Activated CD4-positive, alpha-beta memory T cell treated with anti-CD3 and anti-CD28 coated beads for 36 hours (primary cell): ENCODE measurements at regions of chr12 and their contacts with region 1.

Region 1: GRCh38 chr12:57462251-57462911 is 2.8 kb downstream of the GLI1 start:
- DNase-seq: peak; percentile 94
- H3K4me3 Mint-ChIP-seq: peak overlapping the region; percentile 80
- H3K27ac Mint-ChIP-seq: peak overlapping the region; percentile 40
- H3K4me1 Mint-ChIP-seq: peaks cover 44% of the 10 kb centered on the region
- H3K27me3 Mint-ChIP-seq: peaks cover 4% of the 10 kb centered on the region

Region 2: GRCh38 chr12:57229634-57230380 is 232.6 kb before region 1 on chr12 and contains the start of gene SHMT2:
- CTCF ChIA-PET with region 1: interaction called, 12 read pairs
- POLR2A ChIA-PET with region 1: no interaction called
- intact Hi-C with region 1: no loop called
- DNase-seq: peak; percentile 96
- H3K4me3 Mint-ChIP-seq: peak within 1 kb of the TSS; percentile 98
- H3K27ac Mint-ChIP-seq: peak within 1 kb of the TSS; percentile 94
- H3K4me1 Mint-ChIP-seq: peaks cover 56% of the 10 kb centered on the region
- H3K27me3 Mint-ChIP-seq: peaks cover 20% of the 10 kb centered on the region
- total RNA-seq, gene SHMT2: 401 to 404 TPM

Region 3: GRCh38 chr12:57268264-57268663 is 194.1 kb before region 1 on chr12:
- CTCF ChIA-PET with region 1: interaction called, 10 read pairs
- POLR2A ChIA-PET with region 1: no interaction called
- intact Hi-C with region 1: no loop called
- DNase-seq: peak; percentile 66
- H3K4me3 Mint-ChIP-seq: no peak overlapping the region
- H3K27ac Mint-ChIP-seq: peak overlapping the region; percentile 81
- H3K4me1 Mint-ChIP-seq: peaks cover 16% of the 10 kb centered on the region
- H3K27me3 Mint-ChIP-seq: no peaks in the 10 kb centered on the region

Region 4: DNA sequence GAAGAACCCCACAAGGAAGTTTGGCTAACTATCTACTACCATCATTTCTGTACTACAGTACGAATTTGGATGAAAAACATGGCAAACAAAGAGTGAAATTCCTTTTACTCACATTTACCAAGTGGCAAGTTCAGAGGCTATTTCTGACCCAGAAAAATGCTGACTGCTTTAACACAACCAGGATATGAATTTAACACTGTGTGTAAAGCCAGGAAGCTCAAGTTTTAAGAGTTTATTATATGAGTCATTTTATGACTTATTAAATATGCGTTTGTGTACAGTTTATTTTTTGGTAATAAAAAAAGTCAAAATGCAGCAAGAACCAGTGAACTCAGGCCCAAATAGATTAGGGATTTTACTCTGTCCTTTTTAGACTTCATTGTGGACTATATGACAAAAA is 153.0 kb before region 1 on chr12:
- CTCF ChIA-PET with region 1: interaction called, 31 read pairs
- POLR2A ChIA-PET with region 1: no interaction called
- intact Hi-C with region 1: no loop called
- DNase-seq: no peak
- H3K4me3 Mint-ChIP-seq: no peak overlapping the region
- H3K27ac Mint-ChIP-seq: no peak overlapping the region
- H3K4me1 Mint-ChIP-seq: peaks cover 8% of the 10 kb centered on the region
- H3K27me3 Mint-ChIP-seq: no peaks in the 10 kb centered on the region

Region 5: DNA sequence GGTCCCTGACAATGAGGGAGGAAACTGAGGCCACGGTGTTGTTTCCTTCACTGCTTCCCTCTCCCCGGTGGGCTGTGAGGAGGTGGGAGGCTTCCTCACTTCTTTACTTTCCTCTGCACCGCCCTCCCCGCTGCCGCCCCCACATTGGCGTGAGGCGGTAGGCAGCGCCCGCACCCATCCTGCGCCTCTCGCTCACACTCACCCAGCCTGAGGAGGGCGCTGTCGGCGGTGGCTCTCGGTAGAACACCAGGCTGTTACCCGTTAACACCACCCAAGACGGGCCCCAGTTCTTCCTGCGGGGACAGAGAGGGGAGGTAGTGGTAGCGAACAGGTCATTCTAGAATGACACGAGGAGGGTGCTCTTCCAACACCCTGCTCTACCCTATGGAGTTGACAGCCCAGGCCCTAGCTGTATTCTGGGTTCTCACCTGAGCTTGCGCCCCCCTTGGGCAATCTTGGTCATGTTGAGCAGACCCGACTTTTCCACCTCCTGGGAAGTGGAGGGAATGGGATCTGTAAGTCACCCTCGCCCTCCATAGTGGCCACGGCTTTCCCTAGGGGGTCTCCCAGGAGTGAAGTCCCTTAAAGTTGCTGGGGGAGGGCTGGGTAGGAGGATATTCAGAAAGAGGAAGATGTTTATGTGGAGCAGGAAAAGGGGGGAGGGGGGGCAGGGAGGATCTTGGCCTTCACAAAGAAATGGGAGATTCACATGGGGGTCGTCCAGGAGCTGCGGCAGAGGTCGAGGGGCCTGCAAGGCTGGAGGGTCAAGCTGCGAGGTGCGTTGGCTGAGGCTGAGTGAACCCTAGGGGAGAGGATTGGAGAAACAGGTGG is 14.0 kb after region 1 on chr12:
- CTCF ChIA-PET with region 1: interaction called, 28 read pairs
- POLR2A ChIA-PET with region 1: interaction called, 10 read pairs
- intact Hi-C with region 1: loop called (anchors 1 kb)
- DNase-seq: peak; percentile 94
- H3K4me3 Mint-ChIP-seq: peak overlapping the region; percentile 87
- H3K27ac Mint-ChIP-seq: peak overlapping the region; percentile 99
- H3K4me1 Mint-ChIP-seq: peaks cover 60% of the 10 kb centered on the region
- H3K27me3 Mint-ChIP-seq: no peaks in the 10 kb centered on the region

Region 6: DNA sequence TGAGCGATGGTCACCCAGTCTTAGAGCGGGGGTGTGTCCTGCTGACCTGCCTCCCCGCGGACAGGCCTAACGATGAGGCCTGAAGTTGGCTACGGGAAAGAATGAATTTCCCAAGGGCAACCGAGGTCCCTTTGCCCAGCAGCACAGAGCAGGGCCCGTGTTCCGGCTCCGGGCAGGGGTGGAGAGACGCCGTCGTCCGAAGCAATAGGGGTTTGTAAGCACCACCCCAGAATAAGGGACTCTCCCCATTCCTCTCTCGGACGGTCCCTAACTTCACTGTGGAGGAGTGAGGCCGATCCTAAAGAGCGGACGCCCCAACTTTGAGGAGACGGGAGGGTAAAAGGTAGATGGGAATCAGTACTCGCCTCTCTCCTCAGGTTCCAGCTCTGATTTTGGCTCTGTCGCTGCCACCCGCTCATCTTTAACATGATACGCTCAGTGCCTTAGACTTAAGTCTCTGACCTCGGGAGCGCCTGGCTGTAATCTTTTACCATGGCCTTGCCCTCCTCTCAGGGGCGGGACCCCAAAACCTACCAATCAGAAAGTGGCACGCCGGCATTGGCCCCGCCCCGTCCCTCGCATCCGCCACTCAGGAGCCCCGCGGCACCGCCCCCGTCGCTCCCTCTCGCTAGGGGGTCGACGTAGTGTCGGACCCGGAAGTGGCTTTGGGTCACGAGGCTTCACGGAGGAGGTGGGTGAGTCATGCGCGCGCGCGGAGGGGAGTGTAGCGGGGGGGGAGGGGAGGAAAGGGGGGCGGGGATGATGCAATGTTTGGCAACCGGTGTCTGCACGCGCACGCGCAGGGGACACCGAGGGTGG is 57.9 kb after region 1 on chr12 and contains the start of gene DDIT3:
- CTCF ChIA-PET with region 1: interaction called, 7 read pairs
- POLR2A ChIA-PET with region 1: interaction called, 3 read pairs
- intact Hi-C with region 1: loop called (anchors 1 kb)
- DNase-seq: peak; percentile 100
- H3K4me3 Mint-ChIP-seq: peak within 1 kb of the TSS; percentile 94
- H3K27ac Mint-ChIP-seq: peak within 1 kb of the TSS; percentile 100
- H3K4me1 Mint-ChIP-seq: peaks cover 55% of the 10 kb centered on the region
- H3K27me3 Mint-ChIP-seq: no peaks in the 10 kb centered on the region
- total RNA-seq, gene DDIT3: 24.1 to 25.2 TPM